ENCODE measurements at regions of chr15 and their contacts with region 1.

Region 1: DNA sequence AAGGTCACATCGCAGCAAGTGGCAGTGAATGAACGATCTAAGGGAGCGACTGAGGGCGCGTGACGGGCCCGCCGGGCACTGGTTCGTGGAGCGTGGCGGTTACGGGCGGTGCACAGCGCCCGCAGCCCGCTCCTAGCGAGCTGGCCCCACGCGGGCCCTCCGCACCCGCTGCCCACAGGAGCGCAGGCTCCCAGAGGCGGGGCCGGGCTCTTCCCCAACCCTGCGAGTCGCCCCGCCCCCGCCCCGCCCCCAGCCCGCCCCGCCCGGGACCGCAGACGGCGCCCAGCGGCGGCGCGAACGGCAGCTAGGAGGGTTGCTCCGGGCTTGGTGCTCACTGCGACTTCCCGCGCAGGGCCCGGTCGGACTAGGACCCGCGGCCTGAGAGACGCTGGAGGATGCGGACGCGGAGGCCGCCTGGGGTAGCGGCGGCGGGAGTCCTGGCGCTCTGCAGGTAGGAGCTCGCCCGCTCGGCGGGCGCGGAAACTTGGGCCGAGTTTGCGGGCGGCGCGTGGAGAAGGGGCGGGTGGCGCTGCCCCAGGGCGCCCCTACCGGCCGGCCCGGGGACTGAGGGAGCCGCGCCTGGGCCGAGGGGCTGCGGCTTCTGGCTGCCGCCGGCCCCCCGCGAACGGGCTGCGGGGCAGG is at the start of gene C15orf39:
- DNase-seq: peak; percentile 87
- ATAC-seq: peak; percentile 57
- H3K4me3 Mint-ChIP-seq: peak within 1 kb of the TSS; percentile 86
- H3K27ac Mint-ChIP-seq: peak within 1 kb of the TSS; percentile 89
- H3K4me1 Mint-ChIP-seq: peaks cover 34% of the 10 kb centered on the region
- H3K27me3 Mint-ChIP-seq: no peaks in the 10 kb centered on the region
- total RNA-seq, gene C15orf39: 18.6 to 25.1 TPM

Region 2: GRCh38 chr15:73991726-73992593 is 1209.8 kb before region 1 on chr15 and contains the start of gene STOML1:
- CTCF ChIA-PET with region 1: no interaction called
- POLR2A ChIA-PET with region 1: no interaction called
- intact Hi-C with region 1: loop called in 1 of 2 experiments (anchors 10 kb)
- DNase-seq: peak; percentile 96
- ATAC-seq: peak; percentile 74
- H3K4me3 Mint-ChIP-seq: peak within 1 kb of the TSS; percentile 74
- H3K27ac Mint-ChIP-seq: peak within 1 kb of the TSS; percentile 86
- H3K4me1 Mint-ChIP-seq: peaks cover 42% of the 10 kb centered on the region
- H3K27me3 Mint-ChIP-seq: no peaks in the 10 kb centered on the region
- total RNA-seq, gene STOML1: 6.3 to 7.1 TPM

Region 3: GRCh38 chr15:74615508-74616365 is 586.0 kb before region 1 on chr15 and contains the start of gene CLK3:
- CTCF ChIA-PET with region 1: no interaction called
- POLR2A ChIA-PET with region 1: no interaction called
- intact Hi-C with region 1: loop called in 1 of 2 experiments (anchors 2 kb)
- DNase-seq: peak; percentile 99
- ATAC-seq: peak; percentile 90
- H3K4me3 Mint-ChIP-seq: peak within 1 kb of the TSS; percentile 93
- H3K27ac Mint-ChIP-seq: peak within 1 kb of the TSS; percentile 95
- H3K4me1 Mint-ChIP-seq: peaks cover 42% of the 10 kb centered on the region
- H3K27me3 Mint-ChIP-seq: no peaks in the 10 kb centered on the region
- total RNA-seq, gene CLK3: 130 to 175 TPM

Region 4: GRCh38 chr15:74906446-74907162 is 295.1 kb before region 1 on chr15 and contains the start of gene FAM219B:
- CTCF ChIA-PET with region 1: interaction called, 5 read pairs
- POLR2A ChIA-PET with region 1: no interaction called
- intact Hi-C with region 1: loop called in 1 of 2 experiments (anchors 5 kb)
- DNase-seq: peak; percentile 88
- ATAC-seq: peak; percentile 88
- H3K4me3 Mint-ChIP-seq: peak within 1 kb of the TSS; percentile 92
- H3K27ac Mint-ChIP-seq: peak within 1 kb of the TSS; percentile 94
- H3K4me1 Mint-ChIP-seq: peaks cover 37% of the 10 kb centered on the region
- H3K27me3 Mint-ChIP-seq: no peaks in the 10 kb centered on the region
- total RNA-seq, gene FAM219B: 39.3 to 49.7 TPM

Region 5: GRCh38 chr15:74988007-74988800 is 213.5 kb before region 1 on chr15:
- CTCF ChIA-PET with region 1: no interaction called
- POLR2A ChIA-PET with region 1: no interaction called
- intact Hi-C with region 1: loop called in 1 of 2 experiments (anchors 1 kb)
- DNase-seq: peak; percentile 76
- ATAC-seq: peak; percentile 57
- H3K4me3 Mint-ChIP-seq: no peak overlapping the region
- H3K27ac Mint-ChIP-seq: no peak overlapping the region
- H3K4me1 Mint-ChIP-seq: peaks cover 16% of the 10 kb centered on the region
- H3K27me3 Mint-ChIP-seq: peaks cover 13% of the 10 kb centered on the region

Region 6: GRCh38 chr15:75042730-75043508 is 158.8 kb before region 1 on chr15:
- CTCF ChIA-PET with region 1: interaction called, 12 read pairs
- POLR2A ChIA-PET with region 1: no interaction called
- intact Hi-C with region 1: loop called in 1 of 2 experiments (anchors 1 kb)
- DNase-seq: peak; percentile 76
- ATAC-seq: peak; percentile 79
- H3K4me3 Mint-ChIP-seq: no peak overlapping the region
- H3K27ac Mint-ChIP-seq: no peak overlapping the region
- H3K4me1 Mint-ChIP-seq: peaks cover 16% of the 10 kb centered on the region
- H3K27me3 Mint-ChIP-seq: no peaks in the 10 kb centered on the region

Region 7: DNA sequence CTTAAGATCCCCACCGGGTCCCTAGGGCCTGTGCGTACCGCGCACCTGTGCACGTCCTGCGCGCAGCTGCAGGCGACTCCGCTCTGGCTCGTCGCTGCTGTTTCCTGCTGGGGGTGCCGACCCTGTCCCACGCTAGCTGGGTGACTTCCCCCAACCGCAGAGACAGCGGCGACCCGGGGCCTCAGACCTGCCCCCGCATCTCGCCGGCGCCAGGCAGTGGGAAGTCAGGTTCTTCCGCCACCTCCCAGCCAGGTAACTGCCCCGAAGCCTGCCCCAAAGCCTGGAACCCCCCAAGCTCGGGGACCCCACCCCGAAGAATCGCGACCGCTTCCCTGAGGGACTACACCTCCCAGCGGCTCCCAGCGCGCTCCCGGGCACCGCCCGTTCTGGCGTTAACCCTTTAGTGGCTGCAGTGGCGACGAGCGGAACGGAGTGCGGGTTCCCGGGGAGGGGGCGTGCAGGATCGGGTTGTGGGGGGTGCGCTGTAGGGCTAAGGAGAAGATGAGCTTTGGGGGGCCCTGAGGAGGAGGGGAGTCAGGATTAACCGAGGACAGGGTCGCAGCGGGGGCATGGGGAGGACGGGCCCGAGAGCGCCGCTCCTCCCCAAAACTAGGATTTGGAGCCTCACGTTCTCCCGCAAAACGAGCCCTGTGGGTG is 145.6 kb after region 1 on chr15:
- CTCF ChIA-PET with region 1: no interaction called
- POLR2A ChIA-PET with region 1: no interaction called
- intact Hi-C with region 1: no loop called
- DNase-seq: peak; percentile 72
- ATAC-seq: peak; percentile 57
- H3K4me3 Mint-ChIP-seq: peak overlapping the region; percentile 70
- H3K27ac Mint-ChIP-seq: peak overlapping the region; percentile 5
- H3K4me1 Mint-ChIP-seq: peaks cover 32% of the 10 kb centered on the region
- H3K27me3 Mint-ChIP-seq: peaks cover 5% of the 10 kb centered on the region

Region 8: DNA sequence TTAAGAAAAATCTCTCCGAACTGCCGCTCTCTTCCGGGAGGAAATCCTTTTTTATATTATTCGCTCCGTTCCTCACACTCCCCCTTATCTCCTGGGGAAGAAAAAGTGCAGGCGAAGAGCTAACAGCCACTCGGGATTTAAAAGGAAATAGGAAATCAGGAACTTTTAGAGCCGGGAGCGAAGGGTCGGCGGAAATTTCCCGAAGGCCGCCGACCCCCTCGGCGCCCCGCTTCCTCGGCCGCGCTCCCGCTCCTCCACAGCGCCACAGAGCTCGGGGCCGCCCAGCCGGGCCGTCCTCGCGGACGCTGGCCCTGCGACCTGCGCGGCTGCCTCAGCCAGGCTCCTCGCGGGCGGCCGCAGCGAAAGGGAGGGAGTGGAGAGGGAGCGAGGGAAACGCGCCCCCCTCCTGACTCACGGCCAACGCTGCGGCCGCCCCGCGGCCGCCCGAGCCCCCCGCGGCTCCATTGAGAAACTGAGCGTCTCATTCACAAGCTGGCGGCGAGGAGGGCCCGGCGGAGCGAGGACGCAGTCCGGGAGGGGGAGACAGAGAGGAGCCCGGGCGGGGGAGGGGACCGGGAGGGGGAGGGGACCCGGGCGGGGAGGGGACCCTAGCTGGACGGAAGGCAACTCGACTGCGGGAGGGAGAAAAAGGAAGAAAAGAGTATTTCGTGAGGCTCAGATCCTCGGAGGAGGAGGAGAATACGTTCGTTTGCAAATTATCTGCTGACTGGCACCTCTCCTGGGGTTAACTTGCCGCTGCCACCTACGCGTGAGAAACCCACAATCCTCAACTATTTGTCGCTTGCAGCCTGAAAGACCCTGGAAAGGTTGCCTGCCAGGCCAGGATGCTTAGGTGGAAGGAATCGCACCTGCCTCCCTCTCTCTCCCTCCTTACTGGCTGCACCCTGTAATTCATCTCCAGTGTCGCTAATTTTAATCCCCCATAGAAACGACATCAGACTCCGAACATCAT is 377.5 kb after region 1 on chr15 and contains the start of gene PTPN9:
- CTCF ChIA-PET with region 1: no interaction called
- POLR2A ChIA-PET with region 1: no interaction called
- intact Hi-C with region 1: loop called in 1 of 2 experiments (anchors 5 kb)
- DNase-seq: peak; percentile 88
- ATAC-seq: peak; percentile 80
- H3K4me3 Mint-ChIP-seq: peak within 1 kb of the TSS; percentile 87
- H3K27ac Mint-ChIP-seq: peak within 1 kb of the TSS; percentile 94
- H3K4me1 Mint-ChIP-seq: peaks cover 13% of the 10 kb centered on the region
- H3K27me3 Mint-ChIP-seq: no peaks in the 10 kb centered on the region
- total RNA-seq, gene PTPN9: 15.0 to 16.5 TPM